Activated naive CD4-positive, alpha-beta T cell treated with anti-CD3 and anti-CD28 coated beads for 36 hours (primary cell): ENCODE measurements at regions of chr6 and their contacts with region 1.

Region 1: GRCh38 chr6:47741807-47742206 is 40.0 kb upstream of the OPN5 start:
- DNase-seq: peak; percentile 41
- H3K4me3 Mint-ChIP-seq: no peak overlapping the region
- H3K27ac Mint-ChIP-seq: peak overlapping the region; percentile 59
- H3K4me1 Mint-ChIP-seq: peaks cover 18% of the 10 kb centered on the region
- H3K27me3 Mint-ChIP-seq: peaks cover 8% of the 10 kb centered on the region

Region 2: DNA sequence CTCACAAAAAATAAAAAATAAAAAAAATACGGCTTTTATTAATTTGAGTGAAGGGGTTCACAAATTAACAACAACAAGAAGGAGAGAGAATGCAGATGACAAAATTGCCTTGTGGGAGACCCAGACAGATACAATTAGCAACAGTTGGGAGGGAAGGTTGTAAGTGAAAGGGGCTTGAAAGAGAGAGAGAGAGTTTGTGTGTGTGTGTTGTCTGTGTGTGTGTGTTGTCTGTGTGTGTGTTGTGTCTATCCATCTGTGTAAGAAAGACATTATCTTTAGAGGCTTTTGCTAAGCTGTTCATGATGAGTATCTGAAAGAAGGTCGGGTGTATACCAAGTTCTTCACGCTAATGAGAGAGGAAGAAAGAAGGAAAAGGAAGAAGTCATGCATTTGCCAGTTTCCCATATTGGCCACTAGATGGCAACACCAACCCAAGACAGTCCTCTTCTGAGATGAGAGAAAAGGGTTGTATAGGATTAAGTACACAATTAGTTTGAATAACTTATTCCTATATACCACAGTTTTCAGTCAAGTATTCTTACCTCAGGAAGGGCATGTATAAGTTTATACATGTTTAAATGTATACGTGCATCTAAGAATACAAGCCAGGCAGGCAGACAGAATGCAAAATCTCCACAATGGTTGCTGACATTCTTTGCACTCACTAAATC is 327.9 kb before region 1 on chr6:
- CTCF ChIA-PET with region 1: no interaction called
- intact Hi-C with region 1: loop called (anchors 1 kb)
- DNase-seq: peak; percentile 55
- H3K4me3 Mint-ChIP-seq: peak overlapping the region; percentile 63
- H3K27ac Mint-ChIP-seq: peak overlapping the region; percentile 46
- H3K4me1 Mint-ChIP-seq: peaks cover 15% of the 10 kb centered on the region
- H3K27me3 Mint-ChIP-seq: no peaks in the 10 kb centered on the region

Region 3: DNA sequence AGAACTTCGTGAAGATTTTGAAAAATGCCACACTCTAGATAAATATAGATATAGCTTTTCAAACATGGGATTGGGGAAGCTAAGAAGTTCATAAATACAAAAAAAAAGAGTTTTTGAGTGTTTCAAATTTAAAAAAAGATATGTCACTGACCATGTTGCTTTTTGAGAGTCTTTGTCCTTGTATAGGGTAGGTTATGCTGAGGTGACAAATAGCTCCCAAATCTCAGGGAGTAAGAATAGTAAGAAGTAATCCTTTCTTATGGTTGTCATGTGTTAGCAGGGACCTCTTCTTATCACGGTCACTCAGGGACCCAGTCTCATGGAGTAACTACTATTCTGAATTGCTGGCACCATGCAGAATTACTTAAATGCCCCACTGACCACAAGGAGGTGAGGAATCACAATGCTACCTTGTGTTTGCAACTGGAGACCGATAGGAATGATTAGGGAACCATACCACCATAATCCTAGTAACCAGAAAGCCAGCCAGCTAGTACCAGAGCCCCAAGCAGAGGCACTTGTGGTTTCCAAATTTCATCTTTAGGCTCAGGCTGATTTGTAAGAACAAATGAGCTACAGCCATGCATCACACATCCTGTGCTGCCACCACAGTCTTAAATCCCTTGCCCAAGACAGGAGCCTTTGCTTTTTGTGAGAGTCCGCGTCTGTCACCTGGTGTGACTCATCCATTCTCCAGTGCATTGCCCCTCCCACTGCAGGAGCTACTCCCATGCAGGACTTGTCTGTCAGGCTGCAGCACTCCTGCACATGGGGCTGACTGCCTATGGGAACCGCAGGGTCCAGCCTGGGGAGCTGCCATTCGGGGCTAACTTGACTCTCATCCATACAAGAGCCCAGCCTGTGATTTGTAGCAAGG is 85.8 kb before region 1 on chr6:
- CTCF ChIA-PET with region 1: no interaction called
- intact Hi-C with region 1: loop called (anchors 1 kb)
- DNase-seq: peak; percentile 73
- H3K4me3 Mint-ChIP-seq: no peak overlapping the region
- H3K27ac Mint-ChIP-seq: no peak overlapping the region
- H3K4me1 Mint-ChIP-seq: peaks cover 3% of the 10 kb centered on the region
- H3K27me3 Mint-ChIP-seq: peaks cover 4% of the 10 kb centered on the region

Region 4: DNA sequence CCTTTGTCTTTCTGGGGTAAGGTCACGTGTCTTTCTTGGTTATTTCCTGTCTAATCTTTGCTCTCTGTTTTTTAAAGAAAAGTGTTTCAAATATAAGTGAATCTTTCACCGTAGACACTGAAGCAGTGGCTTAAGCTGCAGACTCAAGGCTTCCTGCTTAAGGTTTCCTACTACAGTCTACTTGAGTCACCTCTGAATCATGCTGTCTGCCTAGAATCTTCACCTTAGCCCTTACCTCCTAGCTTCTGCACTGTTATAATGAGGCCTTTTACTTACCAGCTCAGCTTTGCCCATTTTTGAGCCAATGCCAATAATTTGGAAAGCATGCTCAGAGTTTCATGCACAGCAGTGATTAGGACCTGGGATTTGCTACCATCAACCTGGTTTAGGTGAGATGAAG is 12.8 kb before region 1 on chr6:
- CTCF ChIA-PET with region 1: interaction called, 5 read pairs
- intact Hi-C with region 1: loop called (anchors 1 kb)
- DNase-seq: peak; percentile 27
- H3K4me3 Mint-ChIP-seq: no peak overlapping the region
- H3K27ac Mint-ChIP-seq: peak overlapping the region; percentile 1
- H3K4me1 Mint-ChIP-seq: peaks cover 16% of the 10 kb centered on the region
- H3K27me3 Mint-ChIP-seq: peaks cover 5% of the 10 kb centered on the region